Activated CD8-positive, alpha-beta T cell treated with anti-CD3 and anti-CD28 coated beads for 36 hours (primary cell): ENCODE measurements at regions of chr9 and their contacts with region 1.

Region 1: DNA sequence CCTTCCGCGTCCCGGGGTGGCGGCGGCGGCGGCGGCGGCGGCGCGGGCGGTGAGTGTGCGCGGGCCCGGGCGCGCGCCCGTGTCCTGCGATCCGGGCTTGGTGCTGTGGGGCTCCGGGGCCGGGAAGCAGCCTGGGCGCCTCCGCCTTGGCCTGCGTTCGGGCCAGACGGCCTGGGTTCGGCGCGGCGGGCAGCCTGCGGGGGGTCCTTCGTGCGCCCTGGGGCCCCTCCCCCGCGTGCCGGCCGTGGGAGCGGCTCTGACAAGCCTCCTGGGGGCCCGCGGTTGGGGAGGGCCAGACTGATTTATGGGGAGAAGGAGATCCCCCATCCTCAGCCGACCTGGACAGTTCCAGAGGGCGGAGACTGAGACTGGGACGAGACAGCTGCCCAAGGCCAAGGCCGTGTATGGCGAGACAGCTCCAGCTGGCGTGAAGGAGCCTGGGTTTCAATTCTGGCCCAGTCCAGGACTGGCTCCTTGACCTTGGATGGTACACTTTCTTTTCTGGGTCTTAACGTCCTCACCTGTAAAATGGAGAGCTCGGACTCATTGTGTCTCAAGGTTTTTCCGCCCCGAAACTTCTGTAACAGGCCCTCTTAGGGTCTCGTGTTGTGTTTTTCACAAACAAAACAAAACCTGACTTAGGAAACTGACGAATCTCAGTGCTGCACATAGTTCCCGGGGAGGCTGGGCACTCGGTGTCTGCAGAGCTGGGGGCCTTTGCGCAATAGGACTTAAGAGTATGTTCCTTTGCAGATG is 603 bp downstream of the TMEM268 start:
- DNase-seq: peak; percentile 44
- ATAC-seq: peak; percentile 65
- H3K4me3 Mint-ChIP-seq: peak overlapping the region; percentile 85
- H3K27ac Mint-ChIP-seq: peak overlapping the region; percentile 89
- H3K4me1 Mint-ChIP-seq: peaks cover 46% of the 10 kb centered on the region
- H3K27me3 Mint-ChIP-seq: no peaks in the 10 kb centered on the region
- CTCF ChIP-seq: no peak

Region 2: GRCh38 chr9:114487607-114488300 is 123.9 kb before region 1 on chr9:
- CTCF ChIA-PET with region 1: interaction called, 10 read pairs
- POLR2A ChIA-PET with region 1: interaction called, 3 read pairs
- intact Hi-C with region 1: no loop called
- DNase-seq: peak; percentile 73
- ATAC-seq: peak; percentile 78
- H3K4me3 Mint-ChIP-seq: no peak overlapping the region
- H3K27ac Mint-ChIP-seq: peak overlapping the region; percentile 9
- H3K4me1 Mint-ChIP-seq: peaks cover 27% of the 10 kb centered on the region
- H3K27me3 Mint-ChIP-seq: no peaks in the 10 kb centered on the region
- CTCF ChIP-seq: peak; percentile 87

Region 3: GRCh38 chr9:114587385-114588202 is 24.1 kb before region 1 on chr9 and contains the start of gene ATP6V1G1:
- CTCF ChIA-PET with region 1: interaction called, 31 read pairs
- POLR2A ChIA-PET with region 1: interaction called, 23 read pairs
- intact Hi-C with region 1: no loop called
- DNase-seq: peak; percentile 100
- ATAC-seq: peak; percentile 96
- H3K4me3 Mint-ChIP-seq: peak within 1 kb of the TSS; percentile 94
- H3K27ac Mint-ChIP-seq: peak within 1 kb of the TSS; percentile 99
- H3K4me1 Mint-ChIP-seq: peaks cover 37% of the 10 kb centered on the region
- H3K27me3 Mint-ChIP-seq: no peaks in the 10 kb centered on the region
- CTCF ChIP-seq: no peak
- total RNA-seq, gene ATP6V1G1: 34.1 to 34.7 TPM

Region 4: DNA sequence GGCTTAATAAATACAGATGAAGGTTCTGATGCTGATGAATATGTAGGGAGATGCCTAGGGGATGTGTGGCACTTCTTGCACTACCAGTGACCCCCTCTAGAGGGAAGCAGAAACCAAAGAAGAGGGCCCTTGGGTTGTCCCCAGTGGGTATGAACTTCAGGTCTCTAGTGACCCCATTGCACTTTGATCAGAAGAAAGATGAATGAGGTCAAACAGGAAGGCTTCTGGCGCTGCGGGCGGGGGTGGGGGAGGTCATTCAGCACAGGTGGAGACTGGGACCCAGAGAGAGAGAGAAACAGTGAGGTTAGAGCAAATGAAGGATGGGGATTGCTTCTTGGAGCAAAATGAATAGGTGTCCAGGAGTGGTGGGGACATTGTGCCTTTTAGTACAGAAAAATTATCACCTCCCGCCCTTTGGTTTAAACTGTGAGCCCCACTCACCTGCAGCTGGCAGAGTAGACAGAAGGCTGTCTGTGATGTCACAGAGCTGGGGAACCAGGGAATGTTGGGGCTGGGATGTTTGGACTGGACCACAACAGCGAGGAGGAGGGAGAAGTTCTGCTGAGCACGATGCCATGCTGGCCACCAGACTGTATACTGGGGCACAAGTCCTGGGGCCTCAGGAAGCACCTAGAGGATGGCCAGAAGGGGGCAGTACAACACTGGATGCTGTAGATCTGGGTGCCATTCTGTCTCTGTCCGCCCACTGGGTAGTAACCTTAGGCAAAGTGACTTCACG is 70.1 kb after region 1 on chr9 and contains the start of gene TEX48:
- CTCF ChIA-PET with region 1: no interaction called
- POLR2A ChIA-PET with region 1: no interaction called
- intact Hi-C with region 1: no loop called
- DNase-seq: peak; percentile 92
- ATAC-seq: peak; percentile 90
- H3K4me3 Mint-ChIP-seq: no peak within 1 kb of the TSS
- H3K27ac Mint-ChIP-seq: peak within 1 kb of the TSS; percentile 89
- H3K4me1 Mint-ChIP-seq: peaks cover 69% of the 10 kb centered on the region
- H3K27me3 Mint-ChIP-seq: peaks cover 11% of the 10 kb centered on the region
- CTCF ChIP-seq: peak; percentile 81
- total RNA-seq, gene TEX48: 0.65 TPM in 1 of 2 experiments, not detected in the other